ENCODE measurements at regions of chr10 and their contacts with region 1.

Region 1: GRCh38 chr10:73917566-73918305 is 6.8 kb downstream of the PLAU start:
- DNase-seq: peak; percentile 68
- ATAC-seq: peak; percentile 10
- H3K4me3 ChIP-seq: no peak overlapping the region
- H3K27ac ChIP-seq: no peak overlapping the region
- H3K4me1 ChIP-seq: peaks cover 19% of the 10 kb centered on the region
- H3K27me3 ChIP-seq: no peaks in the 10 kb centered on the region
- CTCF ChIP-seq: no peak
- POLR2A ChIP-seq: peak; percentile 67
- RAD21 ChIP-seq: no peak

Region 2: DNA sequence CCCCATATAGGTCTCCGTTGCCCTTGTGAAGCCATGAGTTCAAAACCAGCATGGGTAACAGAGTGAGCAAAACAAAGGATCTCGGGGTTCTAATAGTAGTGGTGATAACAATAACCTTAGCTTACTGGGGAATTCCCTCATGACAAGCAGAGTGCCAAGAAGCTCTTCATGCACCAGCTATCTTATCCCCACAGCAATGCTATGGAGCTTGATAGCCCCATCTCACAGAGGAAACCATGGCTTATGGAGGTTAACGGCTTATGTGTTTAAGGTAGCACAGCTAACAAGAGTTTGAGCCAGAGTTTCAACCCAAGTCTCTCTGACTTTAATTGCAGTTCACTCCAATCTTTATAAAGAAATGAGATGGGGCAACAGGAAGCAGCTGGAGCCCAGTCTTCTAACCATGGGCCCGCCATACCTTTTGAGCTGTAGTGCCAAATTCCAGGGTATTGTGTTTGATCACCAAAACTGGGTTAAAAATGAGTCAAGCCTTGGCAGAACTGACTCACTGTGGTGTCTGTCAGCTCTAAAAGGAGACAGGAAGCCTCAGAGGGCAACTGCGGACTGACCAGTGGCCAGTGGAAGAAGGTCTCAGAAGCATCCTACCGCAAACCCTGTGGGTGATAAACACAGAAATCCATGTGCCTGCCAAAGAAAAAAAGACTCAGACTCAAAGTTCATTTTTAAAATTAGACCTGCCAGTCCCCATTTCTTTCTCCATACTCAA is 23.3 kb before region 1 on chr10:
- CTCF ChIA-PET with region 1: no interaction called
- POLR2A ChIA-PET with region 1: interaction called, 34 read pairs
- dilution Hi-C with region 1: no loop called
- in situ Hi-C with region 1: no loop called
- intact Hi-C with region 1: no loop called
- DNase-seq: peak; percentile 85
- ATAC-seq: peak; percentile 21; the same call in 1 of the 2 replicates
- H3K4me3 ChIP-seq: no peak overlapping the region
- H3K27ac ChIP-seq: no peak overlapping the region
- H3K4me1 ChIP-seq: peaks cover 27% of the 10 kb centered on the region
- H3K27me3 ChIP-seq: no peaks in the 10 kb centered on the region
- CTCF ChIP-seq: no peak
- POLR2A ChIP-seq: no peak
- RAD21 ChIP-seq: no peak

Region 3: GRCh38 chr10:74051736-74052342 is 134.1 kb after region 1 on chr10:
- CTCF ChIA-PET with region 1: no interaction called
- POLR2A ChIA-PET with region 1: interaction called, 16 read pairs
- dilution Hi-C with region 1: no loop called
- in situ Hi-C with region 1: no loop called
- intact Hi-C with region 1: no loop called
- DNase-seq: no peak
- ATAC-seq: no peak
- H3K4me3 ChIP-seq: no peak overlapping the region
- H3K27ac ChIP-seq: 0 out of 2 replicates have a peak overlapping the region, but pooled peaks have one; percentile 33
- H3K4me1 ChIP-seq: peaks cover 30% of the 10 kb centered on the region
- H3K27me3 ChIP-seq: no peaks in the 10 kb centered on the region
- CTCF ChIP-seq: no peak
- POLR2A ChIP-seq: no peak
- RAD21 ChIP-seq: no peak

Region 4: GRCh38 chr10:74418285-74418872 is 500.6 kb after region 1 on chr10:
- CTCF ChIA-PET with region 1: no interaction called
- POLR2A ChIA-PET with region 1: no interaction called
- dilution Hi-C with region 1: no loop called
- in situ Hi-C with region 1: no loop called
- intact Hi-C with region 1: no loop called
- DNase-seq: no peak
- ATAC-seq: no peak
- H3K4me3 ChIP-seq: no peak overlapping the region
- H3K27ac ChIP-seq: no peak overlapping the region
- H3K4me1 ChIP-seq: no peaks in the 10 kb centered on the region; the same call in 1 of the 2 replicates
- H3K27me3 ChIP-seq: no peaks in the 10 kb centered on the region
- CTCF ChIP-seq: no peak
- POLR2A ChIP-seq: no peak
- RAD21 ChIP-seq: no peak